Activated CD4-positive, alpha-beta memory T cell treated with anti-CD3 and anti-CD28 coated beads for 36 hours (primary cell): ENCODE measurements at regions of chr1 and their contacts with region 1.

Region 1: GRCh38 chr1:182781841-182782586 is 7.6 kb upstream of the NPL start:
- DNase-seq: peak; percentile 85
- H3K4me3 Mint-ChIP-seq: no peak overlapping the region
- H3K27ac Mint-ChIP-seq: no peak overlapping the region
- H3K4me1 Mint-ChIP-seq: peaks cover 8% of the 10 kb centered on the region
- H3K27me3 Mint-ChIP-seq: no peaks in the 10 kb centered on the region

Region 2: DNA sequence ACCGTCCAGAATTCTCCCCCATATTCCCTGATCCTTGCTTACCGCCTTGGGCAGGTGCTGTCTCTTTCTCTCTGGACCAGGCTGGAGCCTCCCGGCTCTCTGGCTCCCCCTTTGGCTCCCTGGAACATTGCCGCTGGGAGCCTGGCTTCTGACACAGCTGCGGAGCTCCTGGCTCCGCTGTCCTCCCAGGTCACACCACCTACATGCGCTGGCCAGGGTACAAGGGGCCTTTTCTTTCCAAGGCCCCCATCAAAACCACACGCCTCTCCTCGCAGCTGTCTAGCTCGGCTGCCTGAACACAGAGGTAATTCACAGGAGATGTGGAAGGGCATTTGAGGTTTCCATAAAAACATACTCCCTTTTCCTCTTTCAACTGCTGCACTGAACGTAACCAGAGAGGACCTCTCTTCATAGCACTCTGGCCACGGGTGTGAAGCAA is 713.0 kb before region 1 on chr1:
- CTCF ChIA-PET with region 1: no interaction called
- POLR2A ChIA-PET with region 1: no interaction called
- intact Hi-C with region 1: loop called (anchors 5 kb)
- DNase-seq: peak; percentile 63
- H3K4me3 Mint-ChIP-seq: no peak overlapping the region
- H3K27ac Mint-ChIP-seq: no peak overlapping the region
- H3K4me1 Mint-ChIP-seq: no peaks in the 10 kb centered on the region
- H3K27me3 Mint-ChIP-seq: peaks cover 15% of the 10 kb centered on the region

Region 3: DNA sequence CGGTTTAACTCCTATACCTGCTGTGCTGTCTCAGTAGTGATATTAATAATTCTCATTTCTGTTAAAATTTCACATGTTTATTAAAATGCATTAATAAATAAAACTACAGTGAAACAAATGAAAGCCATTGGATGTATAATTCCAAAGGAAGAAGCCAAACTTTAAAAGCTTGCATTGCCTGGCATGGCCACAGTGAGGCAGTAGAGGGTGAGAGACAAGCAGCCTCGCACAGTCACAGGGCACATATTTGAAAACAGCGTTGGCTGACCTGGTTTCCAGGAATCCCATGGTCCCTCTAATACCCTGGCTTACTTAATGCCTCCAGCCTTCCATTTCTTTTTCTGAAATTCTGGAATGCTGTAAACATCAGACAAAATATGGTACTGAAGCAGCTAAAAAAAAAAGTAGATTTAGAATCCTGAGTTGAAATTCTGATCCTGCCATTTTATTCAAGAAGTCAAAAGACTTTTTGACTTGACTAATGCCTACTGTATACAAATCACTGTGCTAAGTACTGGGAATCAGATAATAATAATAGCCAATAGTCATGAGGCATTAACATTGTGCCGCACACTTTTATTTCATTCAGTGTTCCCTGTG is 186.3 kb before region 1 on chr1:
- CTCF ChIA-PET with region 1: interaction called, 1,086 read pairs
- POLR2A ChIA-PET with region 1: interaction called, 13 read pairs
- intact Hi-C with region 1: loop called (anchors 1 kb)
- DNase-seq: peak; percentile 80
- H3K4me3 Mint-ChIP-seq: no peak overlapping the region
- H3K27ac Mint-ChIP-seq: no peak overlapping the region
- H3K4me1 Mint-ChIP-seq: peaks cover 10% of the 10 kb centered on the region
- H3K27me3 Mint-ChIP-seq: no peaks in the 10 kb centered on the region

Region 4: DNA sequence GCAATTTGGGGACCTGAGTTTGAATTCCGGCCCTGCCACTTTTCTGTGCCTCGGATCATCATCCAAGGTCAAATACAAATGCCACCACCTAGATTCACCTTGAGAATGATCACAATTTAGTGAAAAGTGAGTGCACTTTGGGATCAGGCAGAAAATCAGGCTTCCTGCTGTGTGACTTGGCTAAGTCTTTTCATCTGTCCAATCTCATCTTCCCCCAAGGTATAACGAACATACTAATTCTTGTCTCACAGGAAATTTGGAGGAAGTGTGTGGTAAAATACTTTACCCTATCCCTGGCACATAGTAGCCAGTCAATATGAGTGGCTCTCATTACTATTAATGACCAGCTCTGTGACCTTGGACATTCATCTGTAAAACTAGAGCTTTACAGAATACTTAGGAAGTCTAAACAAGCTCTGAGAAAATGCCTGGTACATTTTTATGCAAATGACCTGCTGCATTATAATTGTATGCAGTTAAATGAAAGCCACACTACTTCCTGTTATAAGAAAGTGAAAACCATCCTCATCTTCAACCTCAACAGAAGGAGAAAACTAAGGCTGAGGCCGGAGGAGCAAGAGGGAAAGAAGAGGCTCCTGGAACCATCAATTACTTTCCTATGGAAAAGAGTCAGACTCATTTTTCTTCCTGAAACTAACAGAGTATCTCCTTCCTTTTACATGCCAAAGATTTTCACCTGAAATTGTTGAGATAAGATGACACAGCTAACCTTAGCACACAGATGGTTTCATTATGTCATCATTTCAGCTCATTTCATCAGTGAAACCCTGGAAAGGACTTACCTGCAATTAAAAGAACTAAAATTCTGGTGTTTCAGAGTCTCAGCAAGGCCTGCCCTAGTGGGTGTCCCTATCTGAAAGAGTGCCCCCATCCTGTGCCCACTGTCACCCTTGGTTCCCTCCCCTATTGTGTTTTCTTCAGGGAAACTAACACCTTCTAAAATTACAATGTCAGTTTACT is 65.0 kb before region 1 on chr1:
- CTCF ChIA-PET with region 1: interaction called, 4 read pairs
- POLR2A ChIA-PET with region 1: no interaction called
- intact Hi-C with region 1: loop called (anchors 5 kb)
- DNase-seq: no peak
- H3K4me3 Mint-ChIP-seq: no peak overlapping the region
- H3K27ac Mint-ChIP-seq: peak overlapping the region; percentile 19
- H3K4me1 Mint-ChIP-seq: peaks cover 39% of the 10 kb centered on the region
- H3K27me3 Mint-ChIP-seq: no peaks in the 10 kb centered on the region

Region 5: GRCh38 chr1:182795563-182796228 is 13.7 kb after region 1 on chr1:
- CTCF ChIA-PET with region 1: interaction called, 11 read pairs
- POLR2A ChIA-PET with region 1: no interaction called
- intact Hi-C with region 1: no loop called
- DNase-seq: no peak
- H3K4me3 Mint-ChIP-seq: no peak overlapping the region
- H3K27ac Mint-ChIP-seq: no peak overlapping the region
- H3K4me1 Mint-ChIP-seq: no peaks in the 10 kb centered on the region
- H3K27me3 Mint-ChIP-seq: no peaks in the 10 kb centered on the region

Region 6: DNA sequence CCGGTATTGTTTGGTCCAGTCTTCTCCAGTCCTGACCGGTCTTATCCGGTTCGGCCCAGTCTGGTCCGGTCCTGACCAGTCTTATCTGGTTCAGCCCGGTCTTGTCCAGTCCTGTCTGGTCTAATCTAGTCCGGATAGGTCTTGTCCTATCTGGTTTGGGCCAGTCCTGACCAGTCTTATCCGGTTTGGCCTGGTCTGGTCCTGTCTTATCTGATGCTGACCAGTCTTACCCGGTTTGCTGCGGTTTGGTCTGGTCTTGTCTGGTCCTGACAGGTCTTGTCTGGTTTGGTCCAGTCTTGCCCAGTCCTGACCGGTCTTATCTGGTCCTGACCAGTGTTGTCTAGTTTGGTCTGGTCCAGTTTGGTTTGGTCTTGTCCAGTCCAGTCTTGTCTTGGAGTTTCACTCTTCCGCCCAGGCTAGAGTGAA is 87.2 kb after region 1 on chr1:
- CTCF ChIA-PET with region 1: no interaction called
- POLR2A ChIA-PET with region 1: no interaction called
- intact Hi-C with region 1: no loop called
- DNase-seq: peak; percentile 35
- H3K4me3 Mint-ChIP-seq: no peak overlapping the region
- H3K27ac Mint-ChIP-seq: no peak overlapping the region
- H3K4me1 Mint-ChIP-seq: peaks cover 33% of the 10 kb centered on the region
- H3K27me3 Mint-ChIP-seq: no peaks in the 10 kb centered on the region

Region 7: DNA sequence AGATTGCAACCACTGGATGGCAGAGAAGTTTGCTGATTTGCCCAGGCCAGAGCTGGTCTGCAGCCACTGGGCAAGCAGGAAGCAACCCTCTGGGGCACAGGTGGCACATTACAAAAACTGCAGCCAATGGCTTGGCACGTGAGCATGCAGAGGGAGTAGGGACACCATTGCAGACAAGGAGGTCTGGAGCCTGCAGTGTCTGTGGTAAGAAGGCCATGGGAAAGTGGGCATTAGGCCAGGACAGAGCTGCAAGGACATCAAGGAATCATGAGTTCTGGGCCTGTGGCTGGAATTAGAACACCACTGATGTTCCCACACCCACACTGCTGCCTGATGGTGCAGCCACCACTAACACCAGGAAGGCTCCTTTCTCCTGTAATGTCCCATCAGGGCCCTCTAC is 1382.5 kb after region 1 on chr1:
- CTCF ChIA-PET with region 1: no interaction called
- POLR2A ChIA-PET with region 1: no interaction called
- intact Hi-C with region 1: no loop called
- DNase-seq: no peak
- H3K4me3 Mint-ChIP-seq: no peak overlapping the region
- H3K27ac Mint-ChIP-seq: no peak overlapping the region
- H3K4me1 Mint-ChIP-seq: peaks cover 14% of the 10 kb centered on the region
- H3K27me3 Mint-ChIP-seq: peaks cover 1% of the 10 kb centered on the region